Activated naive CD4-positive, alpha-beta T cell treated with anti-CD3 and anti-CD28 coated beads for 36 hours (primary cell): ENCODE measurements at regions of chr19 and their contacts with region 1.

Region 1: DNA sequence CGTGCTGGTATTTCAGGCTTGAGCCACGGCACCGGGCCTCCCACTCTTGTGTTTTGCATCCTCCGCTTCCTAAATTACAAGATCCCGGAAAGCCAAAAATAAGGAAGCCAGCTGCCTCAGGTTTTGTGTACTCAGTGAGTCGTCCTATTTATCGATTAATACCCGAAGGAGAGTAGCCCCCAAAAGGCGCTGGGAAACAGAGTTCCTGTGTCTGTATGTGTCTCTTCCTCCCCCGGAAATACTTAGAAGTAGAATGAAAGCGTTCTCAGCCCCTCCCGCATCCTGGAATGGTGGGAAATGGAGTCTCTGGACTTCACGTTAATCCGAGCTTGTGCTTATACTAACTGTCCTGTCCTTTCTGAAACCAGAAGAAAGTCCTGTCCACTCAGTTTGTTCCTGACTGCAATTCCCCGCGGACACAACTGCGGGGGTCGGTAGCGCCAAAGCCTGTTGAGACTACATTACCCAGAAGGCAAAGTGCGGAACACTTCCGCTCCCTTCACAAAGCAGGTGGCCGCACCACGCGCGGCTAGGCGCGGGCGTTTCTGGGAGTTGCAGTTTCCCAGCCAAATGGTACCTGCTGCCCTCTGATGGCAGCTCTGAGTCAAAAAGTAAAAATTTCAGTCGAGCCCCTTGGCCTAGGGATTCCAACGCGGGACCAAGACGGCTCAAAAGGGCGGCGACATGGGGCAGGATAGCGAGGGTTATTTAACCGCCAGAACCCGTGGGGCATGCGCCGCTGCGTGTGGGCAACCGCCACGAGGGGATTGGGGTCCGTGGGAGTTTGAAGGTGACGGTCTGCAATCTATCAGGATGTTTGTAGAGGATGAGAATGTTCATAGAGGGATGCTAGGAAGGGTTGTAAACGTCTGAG is 2.2 kb upstream of the GSK3A start:
- DNase-seq: peak; percentile 96
- H3K4me3 Mint-ChIP-seq: peak overlapping the region; percentile 86
- H3K27ac Mint-ChIP-seq: peak overlapping the region; percentile 99
- H3K4me1 Mint-ChIP-seq: peaks cover 46% of the 10 kb centered on the region
- H3K27me3 Mint-ChIP-seq: no peaks in the 10 kb centered on the region

Region 2: GRCh38 chr19:41959056-41960053 is 285.2 kb before region 1 on chr19 and contains the start of gene RABAC1:
- CTCF ChIA-PET with region 1: no interaction called
- intact Hi-C with region 1: loop called (anchors 1 kb)
- DNase-seq: peak; percentile 95
- H3K4me3 Mint-ChIP-seq: peak within 1 kb of the TSS; percentile 95
- H3K27ac Mint-ChIP-seq: peak within 1 kb of the TSS; percentile 81
- H3K4me1 Mint-ChIP-seq: peaks cover 13% of the 10 kb centered on the region
- H3K27me3 Mint-ChIP-seq: no peaks in the 10 kb centered on the region
- total RNA-seq, gene RABAC1: 32.8 TPM

Region 3: GRCh38 chr19:42132851-42133528 is 111.6 kb before region 1 on chr19:
- CTCF ChIA-PET with region 1: interaction called, 4 read pairs
- intact Hi-C with region 1: loop called (anchors 1 kb)
- DNase-seq: peak; percentile 79
- H3K4me3 Mint-ChIP-seq: peak overlapping the region; percentile 79
- H3K27ac Mint-ChIP-seq: peak overlapping the region; percentile 86
- H3K4me1 Mint-ChIP-seq: peaks cover 58% of the 10 kb centered on the region
- H3K27me3 Mint-ChIP-seq: no peaks in the 10 kb centered on the region

Region 4: DNA sequence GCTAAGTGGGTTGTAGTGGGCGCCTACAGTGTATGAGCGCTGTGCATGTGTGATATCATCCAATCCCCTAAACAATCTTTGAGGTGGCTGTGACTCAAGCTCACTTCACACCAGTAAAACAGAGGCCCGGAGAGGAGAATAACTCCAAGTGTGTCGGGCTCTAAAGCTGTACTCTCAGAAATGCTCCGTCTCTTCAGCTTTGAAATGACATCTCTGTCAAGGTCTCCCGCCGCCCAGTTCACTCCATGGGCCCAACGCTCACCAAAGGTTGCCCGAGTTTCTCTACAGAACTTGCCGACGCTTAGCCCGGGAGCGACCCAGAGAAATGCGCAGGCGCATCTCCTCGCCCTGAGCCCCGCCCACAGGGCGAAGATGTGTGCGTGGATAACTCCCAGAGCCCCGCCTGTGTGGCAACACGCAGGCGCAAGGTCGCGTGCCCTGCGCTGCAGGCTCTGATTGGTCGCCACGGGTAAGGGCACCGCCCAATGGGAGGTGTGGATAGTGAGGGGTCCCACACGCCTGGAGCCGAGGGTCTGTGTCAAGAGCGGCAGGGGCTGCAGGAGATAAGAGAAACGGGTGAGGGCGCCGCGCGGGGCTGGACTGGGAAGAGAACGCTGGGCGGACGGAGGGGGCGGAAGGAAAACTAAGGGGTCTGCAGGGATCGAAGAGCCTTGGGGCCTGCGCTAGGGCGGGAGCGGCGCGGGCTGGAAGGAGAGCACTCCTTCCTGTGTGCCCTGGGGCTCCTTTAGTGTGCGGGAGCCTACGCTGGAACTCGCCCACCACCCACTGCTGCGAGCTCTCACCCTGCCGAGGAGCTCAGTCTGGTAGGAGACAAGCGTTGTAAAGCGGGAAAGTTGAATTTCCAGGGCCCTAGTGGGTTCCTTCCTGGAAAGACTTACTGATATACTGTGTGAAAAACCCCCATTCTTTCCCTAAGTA is 24.5 kb before region 1 on chr19 and contains the start of gene ZNF526:
- CTCF ChIA-PET with region 1: interaction called, 4 read pairs
- intact Hi-C with region 1: loop called (anchors 1 kb)
- DNase-seq: peak; percentile 97
- H3K4me3 Mint-ChIP-seq: peak within 1 kb of the TSS; percentile 96
- H3K27ac Mint-ChIP-seq: peak within 1 kb of the TSS; percentile 94
- H3K4me1 Mint-ChIP-seq: peaks cover 55% of the 10 kb centered on the region
- H3K27me3 Mint-ChIP-seq: no peaks in the 10 kb centered on the region
- total RNA-seq, gene ZNF526: 11.5 to 11.6 TPM

Region 5: GRCh38 chr19:42283143-42284065 is 38.8 kb after region 1 on chr19:
- CTCF ChIA-PET with region 1: interaction called, 57 read pairs
- intact Hi-C with region 1: loop called (anchors 1 kb)
- DNase-seq: peak; percentile 96
- H3K4me3 Mint-ChIP-seq: peak overlapping the region; percentile 7
- H3K27ac Mint-ChIP-seq: no peak overlapping the region
- H3K4me1 Mint-ChIP-seq: peaks cover 45% of the 10 kb centered on the region
- H3K27me3 Mint-ChIP-seq: no peaks in the 10 kb centered on the region

Region 6: DNA sequence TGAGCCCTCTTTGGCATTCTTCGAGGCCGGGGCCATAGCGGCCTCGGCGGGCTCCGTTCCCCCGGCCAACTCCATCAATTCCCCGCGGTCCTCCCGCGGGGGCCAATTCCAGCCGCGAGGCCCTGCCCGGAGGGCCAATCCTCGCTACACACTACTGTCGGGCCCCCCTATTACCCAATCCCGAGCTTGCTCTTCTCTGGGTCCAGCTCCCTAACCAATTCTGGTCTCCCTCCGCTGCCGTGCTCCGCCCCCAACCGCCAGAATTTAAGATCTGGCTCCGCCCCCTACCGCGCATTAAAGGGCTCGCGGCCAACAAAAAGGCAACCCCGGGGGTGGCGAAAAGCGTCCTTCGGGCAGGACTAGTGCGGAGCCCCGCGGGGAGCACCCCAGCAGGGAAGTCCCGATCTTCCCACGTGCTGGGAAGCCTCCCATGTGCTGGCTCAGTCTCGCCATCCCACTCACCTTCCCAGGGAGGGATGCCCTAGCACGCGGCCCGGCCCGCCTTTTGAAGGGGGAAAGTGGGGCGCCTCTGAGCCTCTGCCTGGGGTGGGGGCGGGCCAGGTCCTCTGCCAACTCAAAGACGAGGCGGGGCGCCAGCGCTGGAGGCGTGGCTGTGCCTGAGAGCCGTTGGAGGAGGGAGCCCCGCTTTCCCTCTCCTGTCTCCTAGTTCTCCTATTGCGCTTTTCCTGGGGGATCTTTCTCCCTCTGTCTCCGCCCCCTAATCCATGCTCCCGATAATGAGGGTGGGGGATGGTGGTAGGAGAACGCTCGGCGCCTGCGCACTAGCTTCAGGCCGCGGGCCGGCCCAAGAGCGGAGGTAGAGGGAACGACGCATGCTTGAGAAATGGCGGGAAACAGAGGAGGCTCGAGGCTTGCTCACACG is 179.1 kb after region 1 on chr19:
- CTCF ChIA-PET with region 1: no interaction called
- intact Hi-C with region 1: loop called (anchors 2 kb)
- DNase-seq: peak; percentile 96
- H3K4me3 Mint-ChIP-seq: peak overlapping the region; percentile 93
- H3K27ac Mint-ChIP-seq: peak overlapping the region; percentile 86
- H3K4me1 Mint-ChIP-seq: peaks cover 33% of the 10 kb centered on the region
- H3K27me3 Mint-ChIP-seq: no peaks in the 10 kb centered on the region